Activated CD4-positive, alpha-beta T cell treated with anti-CD3 and anti-CD28 coated beads for 36 hours (primary cell): ENCODE measurements at regions of chr18 and their contacts with region 1.

Region 1: GRCh38 chr18:24014062-24014985 is at the start of gene TTC39C:
- DNase-seq: peak; percentile 93
- ATAC-seq: peak; percentile 68
- H3K4me3 Mint-ChIP-seq: peak within 1 kb of the TSS; percentile 94
- H3K27ac Mint-ChIP-seq: peak within 1 kb of the TSS; percentile 84
- H3K4me1 Mint-ChIP-seq: peaks cover 70% of the 10 kb centered on the region
- H3K27me3 Mint-ChIP-seq: peaks cover 2% of the 10 kb centered on the region
- total RNA-seq, gene TTC39C: 22.2 to 28.6 TPM

Region 2: DNA sequence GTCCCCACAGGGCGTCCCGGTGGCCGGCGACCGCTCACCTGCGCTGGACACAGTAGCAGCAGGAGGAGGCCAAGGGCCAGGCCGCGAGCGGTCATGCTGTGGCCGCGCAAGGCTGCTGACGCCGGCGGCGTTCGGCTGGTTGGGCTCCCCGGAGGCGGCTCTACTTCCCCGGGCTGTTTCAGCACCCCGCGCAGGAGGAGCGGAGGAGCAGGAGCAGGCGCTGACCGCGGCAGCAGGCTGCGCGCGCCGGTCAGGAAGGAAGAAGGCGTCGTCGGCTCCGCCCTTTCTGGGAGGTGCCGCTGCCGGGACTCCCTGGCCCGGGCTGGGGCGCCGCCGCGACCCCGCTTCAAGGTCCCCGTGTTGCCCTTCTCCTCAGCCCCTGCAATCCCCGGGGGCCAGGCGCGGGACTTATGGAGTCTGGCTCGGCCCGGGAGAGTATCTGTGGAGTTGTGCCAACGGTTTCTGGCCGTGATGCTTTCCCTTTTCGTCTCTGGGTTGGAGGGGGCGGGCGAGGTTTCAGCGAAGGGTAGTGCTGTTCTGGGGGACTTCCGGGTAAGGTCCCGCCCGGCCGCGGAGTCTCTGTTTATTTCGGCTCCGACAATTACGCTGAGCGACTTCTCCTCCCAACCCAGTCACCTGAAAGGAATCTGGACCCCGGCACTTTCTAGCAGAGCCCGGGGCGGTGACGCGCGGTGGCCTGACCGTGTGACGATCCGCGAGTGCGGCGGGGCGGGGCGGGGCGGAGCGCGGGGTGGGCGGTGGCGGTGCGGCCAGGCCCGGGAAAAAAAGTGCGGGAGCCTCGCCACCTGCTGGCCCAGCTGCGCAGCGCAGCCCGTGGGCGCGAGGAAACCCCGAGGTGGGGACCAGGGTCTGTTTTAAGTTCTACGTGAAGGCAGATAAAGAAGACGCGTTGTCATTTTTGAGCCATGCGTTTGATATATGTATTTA is 427.8 kb before region 1 on chr18 and contains the start of gene NPC1:
- CTCF ChIA-PET with region 1: no interaction called
- POLR2A ChIA-PET with region 1: no interaction called
- intact Hi-C with region 1: loop called in 1 of 2 experiments (anchors 2 kb)
- DNase-seq: peak; percentile 95
- ATAC-seq: peak; percentile 95
- H3K4me3 Mint-ChIP-seq: peak within 1 kb of the TSS; percentile 94
- H3K27ac Mint-ChIP-seq: peak within 1 kb of the TSS; percentile 91
- H3K4me1 Mint-ChIP-seq: peaks cover 39% of the 10 kb centered on the region
- H3K27me3 Mint-ChIP-seq: no peaks in the 10 kb centered on the region
- total RNA-seq, gene NPC1: 21.6 to 29.2 TPM

Region 3: GRCh38 chr18:23828426-23828825 is 185.9 kb before region 1 on chr18:
- CTCF ChIA-PET with region 1: no interaction called
- POLR2A ChIA-PET with region 1: no interaction called
- intact Hi-C with region 1: loop called in 1 of 2 experiments (anchors 2 kb)
- DNase-seq: peak; percentile 48
- ATAC-seq: peak; percentile 94
- H3K4me3 Mint-ChIP-seq: no peak overlapping the region
- H3K27ac Mint-ChIP-seq: no peak overlapping the region
- H3K4me1 Mint-ChIP-seq: peaks cover 46% of the 10 kb centered on the region
- H3K27me3 Mint-ChIP-seq: no peaks in the 10 kb centered on the region

Region 4: DNA sequence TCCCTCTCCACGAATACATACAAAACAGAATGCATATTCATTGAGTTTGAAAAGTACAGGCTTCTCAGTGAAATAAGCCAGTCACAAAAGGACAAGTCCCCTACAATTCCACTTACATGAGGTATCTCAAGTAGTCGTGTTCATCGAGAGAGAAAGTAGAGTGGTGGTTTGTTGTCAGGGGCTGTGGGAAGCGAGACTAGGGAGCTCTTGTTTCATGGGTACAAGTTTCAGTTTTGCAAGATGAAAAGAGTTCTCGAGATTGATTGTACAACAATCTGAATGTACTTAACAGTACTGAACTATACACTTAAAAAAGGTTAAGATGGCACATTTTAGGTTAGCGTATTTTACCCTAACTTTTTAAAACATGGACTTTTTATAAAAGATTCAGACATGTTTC is 71.2 kb before region 1 on chr18:
- CTCF ChIA-PET with region 1: no interaction called
- POLR2A ChIA-PET with region 1: interaction called, 5 read pairs
- intact Hi-C with region 1: loop called in 1 of 2 experiments (anchors 2 kb)
- DNase-seq: peak; percentile 67
- ATAC-seq: peak; percentile 91
- H3K4me3 Mint-ChIP-seq: no peak overlapping the region
- H3K27ac Mint-ChIP-seq: no peak overlapping the region
- H3K4me1 Mint-ChIP-seq: peaks cover 37% of the 10 kb centered on the region
- H3K27me3 Mint-ChIP-seq: peaks cover 16% of the 10 kb centered on the region

Region 5: GRCh38 chr18:23972416-23972815 is 41.9 kb before region 1 on chr18:
- CTCF ChIA-PET with region 1: interaction called, 3 read pairs
- POLR2A ChIA-PET with region 1: no interaction called
- intact Hi-C with region 1: loop called (anchors 1 to 2 kb)
- DNase-seq: peak; percentile 55
- ATAC-seq: peak; percentile 92
- H3K4me3 Mint-ChIP-seq: no peak overlapping the region
- H3K27ac Mint-ChIP-seq: no peak overlapping the region
- H3K4me1 Mint-ChIP-seq: peaks cover 52% of the 10 kb centered on the region
- H3K27me3 Mint-ChIP-seq: no peaks in the 10 kb centered on the region

Region 6: DNA sequence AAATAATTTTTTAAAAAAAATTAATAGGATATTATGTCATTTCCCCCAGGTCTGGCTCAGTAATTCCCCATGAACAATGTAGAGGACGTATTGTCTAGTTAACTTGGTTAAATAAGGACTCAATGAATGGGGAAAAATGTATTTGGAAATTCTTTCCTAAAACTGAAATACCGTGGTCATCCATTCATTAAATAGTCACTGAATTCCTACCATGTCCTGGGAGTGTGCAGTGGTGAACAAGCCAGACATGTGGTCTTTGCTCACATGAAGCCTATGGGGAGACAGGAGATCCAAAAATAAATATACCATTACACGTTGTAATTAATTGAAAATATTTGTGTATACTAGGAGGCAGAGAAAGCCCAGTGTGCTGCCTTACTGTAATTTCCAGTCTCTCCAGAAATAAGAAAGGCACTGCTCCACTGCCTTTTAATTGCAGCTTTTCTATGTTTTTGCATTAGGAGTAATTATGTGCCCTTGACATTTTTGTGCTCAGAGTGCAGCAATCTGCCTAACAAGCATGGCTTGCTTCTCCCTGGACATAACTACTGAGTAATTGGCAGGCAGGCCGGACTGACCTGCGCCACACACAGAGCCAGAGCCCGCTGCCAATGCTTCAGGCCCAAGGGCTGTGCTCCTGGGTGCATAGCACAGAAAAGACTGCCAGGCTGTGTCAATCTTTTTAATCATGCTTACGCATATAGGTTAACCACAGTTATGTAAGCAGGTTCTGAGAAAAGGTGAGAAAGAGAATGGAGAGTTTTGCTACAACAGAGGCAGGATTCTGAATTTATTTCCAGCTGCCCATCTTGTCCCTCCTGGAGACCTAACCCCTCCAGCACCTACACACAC is 22.0 kb before region 1 on chr18:
- CTCF ChIA-PET with region 1: interaction called, 3 read pairs
- POLR2A ChIA-PET with region 1: no interaction called
- intact Hi-C with region 1: loop called (anchors 1 to 2 kb)
- DNase-seq: peak; percentile 57
- ATAC-seq: peak; percentile 95
- H3K4me3 Mint-ChIP-seq: no peak overlapping the region
- H3K27ac Mint-ChIP-seq: peak overlapping the region; percentile 60
- H3K4me1 Mint-ChIP-seq: peaks cover 51% of the 10 kb centered on the region
- H3K27me3 Mint-ChIP-seq: peaks cover 3% of the 10 kb centered on the region

Region 7: DNA sequence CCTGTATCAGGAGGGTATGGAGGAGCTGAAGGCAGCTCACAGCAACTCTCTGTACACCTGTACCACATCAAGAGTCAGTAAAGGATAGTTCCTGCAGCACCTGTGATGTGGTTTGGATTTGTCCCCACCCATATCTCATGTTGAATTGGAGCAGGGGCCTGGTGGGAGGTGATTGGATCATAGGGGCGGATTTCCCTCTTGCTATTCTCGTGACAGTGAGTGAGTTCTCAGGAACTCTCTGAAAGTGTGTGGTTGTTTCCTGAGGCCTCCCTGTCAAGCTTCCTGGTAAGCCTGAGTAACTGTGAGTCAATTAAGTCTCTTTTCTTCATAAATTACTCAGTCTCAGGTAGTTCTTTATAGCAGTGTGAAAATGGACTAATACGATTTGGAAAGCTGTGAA is 354.4 kb after region 1 on chr18:
- CTCF ChIA-PET with region 1: no interaction called
- POLR2A ChIA-PET with region 1: no interaction called
- intact Hi-C with region 1: loop called (anchors 2 to 10 kb)
- DNase-seq: peak; percentile 77
- ATAC-seq: peak; percentile 88
- H3K4me3 Mint-ChIP-seq: peak overlapping the region; percentile 22
- H3K27ac Mint-ChIP-seq: peak overlapping the region; percentile 77
- H3K4me1 Mint-ChIP-seq: peaks cover 28% of the 10 kb centered on the region
- H3K27me3 Mint-ChIP-seq: peaks cover 3% of the 10 kb centered on the region